Caco-2 (cell line): ENCODE measurements at regions of chr3 and their contacts with region 1.

Region 1: DNA sequence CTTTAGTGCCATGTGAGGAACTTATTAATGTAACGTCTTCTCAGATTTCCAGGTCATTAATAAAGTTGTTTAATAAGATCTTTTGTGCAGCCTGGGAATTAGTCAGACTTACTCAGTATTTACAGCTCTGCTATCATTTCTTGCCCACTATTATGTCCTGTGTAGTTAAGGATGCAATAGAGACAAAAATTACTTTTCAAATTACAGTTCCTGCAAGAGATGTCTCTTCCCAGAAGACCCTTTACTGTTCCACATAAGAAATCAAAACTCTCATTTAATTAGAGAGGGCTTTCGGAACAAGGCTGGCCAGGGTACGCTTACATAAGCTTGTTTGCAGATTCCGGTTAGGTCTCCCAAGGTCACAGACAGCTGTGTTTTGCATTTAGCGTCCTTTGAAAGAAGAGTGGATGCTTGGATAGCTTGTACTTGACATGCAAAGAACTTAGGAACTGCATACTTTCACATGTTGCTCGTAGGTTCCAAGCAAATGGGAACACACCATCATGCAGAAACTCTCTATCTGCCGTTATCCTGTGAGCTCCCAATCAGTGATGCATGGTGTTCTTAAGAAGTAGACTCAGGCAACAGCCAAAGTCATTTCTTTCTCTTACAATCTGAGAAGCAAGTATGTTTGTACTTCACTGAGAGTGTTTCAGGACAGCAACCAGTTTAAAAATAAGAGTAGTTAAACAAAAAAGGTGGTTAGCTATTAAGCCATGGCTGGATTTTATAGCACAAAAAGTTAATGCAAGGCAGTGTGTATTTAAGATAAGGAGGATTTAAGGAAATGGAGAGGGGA is 37.4 kb downstream of the FILIP1L start:
- DNase-seq: peak; percentile 53
- H3K4me3 ChIP-seq: peak overlapping the region; percentile 31
- H3K4me3 Mint-ChIP-seq: peak overlapping the region; percentile 69
- H3K27ac Mint-ChIP-seq: peak overlapping the region; percentile 73
- H3K4me1 ChIP-seq: peaks cover 53% of the 10 kb centered on the region
- H3K4me1 Mint-ChIP-seq: peaks cover 54% of the 10 kb centered on the region
- H3K27me3 ChIP-seq: no peaks in the 10 kb centered on the region
- H3K27me3 Mint-ChIP-seq: no peaks in the 10 kb centered on the region
- CTCF ChIP-seq: no peak

Region 2: DNA sequence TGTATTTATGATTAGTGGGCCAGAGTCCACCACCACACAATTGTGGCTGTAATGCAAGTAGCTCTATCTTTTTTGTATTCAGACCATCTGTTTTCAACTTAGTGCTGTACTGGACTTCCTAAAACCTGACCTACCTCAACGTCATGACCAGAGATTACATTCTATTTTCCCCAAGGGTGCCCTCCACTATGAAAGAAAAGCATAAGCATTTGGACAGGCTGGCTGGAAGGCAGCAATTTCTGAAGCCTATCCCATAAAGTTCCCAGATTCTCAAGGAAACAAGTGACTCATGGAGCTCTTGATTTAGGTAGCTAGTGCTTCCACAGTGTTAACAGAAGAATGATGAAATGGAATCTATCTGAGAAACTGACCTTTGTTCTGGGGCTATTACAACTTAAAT is 362.8 kb before region 1 on chr3:
- CTCF ChIA-PET with region 1: no interaction called
- POLR2A ChIA-PET with region 1: no interaction called
- intact Hi-C with region 1: no loop called
- DNase-seq: no peak
- H3K4me3 ChIP-seq: no peak overlapping the region
- H3K4me3 Mint-ChIP-seq: no peak overlapping the region
- H3K27ac Mint-ChIP-seq: no peak overlapping the region
- H3K4me1 ChIP-seq: no peaks in the 10 kb centered on the region
- H3K4me1 Mint-ChIP-seq: no peaks in the 10 kb centered on the region
- H3K27me3 ChIP-seq: no peaks in the 10 kb centered on the region
- H3K27me3 Mint-ChIP-seq: peaks cover 8% of the 10 kb centered on the region
- CTCF ChIP-seq: no peak

Region 3: DNA sequence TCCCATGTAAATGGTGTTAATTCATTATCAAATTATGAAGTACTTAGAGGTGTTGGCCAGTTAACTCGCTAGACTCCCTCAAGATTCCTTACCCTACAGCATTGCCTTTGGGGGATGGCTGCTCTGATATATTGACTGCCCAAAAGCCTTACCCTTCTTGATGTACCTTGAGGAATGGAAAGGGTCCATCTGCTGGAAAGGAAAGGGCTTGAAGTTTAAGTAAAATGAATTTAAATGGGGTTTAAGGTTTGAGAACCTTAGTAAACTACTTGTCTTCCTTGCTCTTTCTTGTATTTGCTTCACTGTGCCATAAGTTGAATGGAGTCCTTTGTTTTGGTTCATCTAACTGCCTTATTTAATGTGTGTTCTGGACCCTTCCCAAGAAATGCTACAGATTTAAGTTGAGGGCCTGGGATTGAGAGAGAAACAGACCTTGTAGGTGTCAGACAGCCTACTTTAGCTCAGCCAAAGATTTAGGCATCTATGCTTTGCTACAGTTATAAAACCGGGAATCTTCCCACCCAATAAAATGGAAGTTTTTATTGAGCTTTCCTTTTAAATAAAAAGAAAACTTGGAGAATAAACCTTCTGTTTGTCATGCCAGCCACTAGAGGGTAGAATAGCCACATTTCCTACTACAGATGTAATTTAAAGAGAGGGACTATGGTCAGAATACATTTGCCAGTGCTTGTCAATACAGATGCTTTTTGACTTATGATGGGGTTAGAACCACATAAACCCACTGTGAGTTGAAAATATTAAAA is 233.9 kb before region 1 on chr3:
- CTCF ChIA-PET with region 1: interaction called, 4 read pairs
- POLR2A ChIA-PET with region 1: no interaction called
- intact Hi-C with region 1: loop called (anchors 2 kb)
- DNase-seq: peak in 1 of 2 experiments; percentile 33
- H3K4me3 ChIP-seq: no peak overlapping the region
- H3K4me3 Mint-ChIP-seq: no peak overlapping the region
- H3K27ac Mint-ChIP-seq: no peak overlapping the region
- H3K4me1 ChIP-seq: peaks cover 12% of the 10 kb centered on the region; the same call in 1 of the 2 replicates
- H3K4me1 Mint-ChIP-seq: peaks cover 6% of the 10 kb centered on the region
- H3K27me3 ChIP-seq: no peaks in the 10 kb centered on the region
- H3K27me3 Mint-ChIP-seq: no peaks in the 10 kb centered on the region
- CTCF ChIP-seq: peak; percentile 63 to 67

Region 4: GRCh38 chr3:100024520-100025303 is 52.2 kb before region 1 on chr3:
- CTCF ChIA-PET with region 1: no interaction called
- POLR2A ChIA-PET with region 1: no interaction called
- intact Hi-C with region 1: loop called (anchors 1 kb)
- DNase-seq: peak; percentile 43 to 67
- H3K4me3 ChIP-seq: no peak overlapping the region
- H3K4me3 Mint-ChIP-seq: peak overlapping the region; percentile 53
- H3K27ac Mint-ChIP-seq: no peak overlapping the region
- H3K4me1 ChIP-seq: peaks cover 62% of the 10 kb centered on the region
- H3K4me1 Mint-ChIP-seq: peaks cover 27% of the 10 kb centered on the region
- H3K27me3 ChIP-seq: no peaks in the 10 kb centered on the region
- H3K27me3 Mint-ChIP-seq: no peaks in the 10 kb centered on the region
- CTCF ChIP-seq: no peak

Region 5: DNA sequence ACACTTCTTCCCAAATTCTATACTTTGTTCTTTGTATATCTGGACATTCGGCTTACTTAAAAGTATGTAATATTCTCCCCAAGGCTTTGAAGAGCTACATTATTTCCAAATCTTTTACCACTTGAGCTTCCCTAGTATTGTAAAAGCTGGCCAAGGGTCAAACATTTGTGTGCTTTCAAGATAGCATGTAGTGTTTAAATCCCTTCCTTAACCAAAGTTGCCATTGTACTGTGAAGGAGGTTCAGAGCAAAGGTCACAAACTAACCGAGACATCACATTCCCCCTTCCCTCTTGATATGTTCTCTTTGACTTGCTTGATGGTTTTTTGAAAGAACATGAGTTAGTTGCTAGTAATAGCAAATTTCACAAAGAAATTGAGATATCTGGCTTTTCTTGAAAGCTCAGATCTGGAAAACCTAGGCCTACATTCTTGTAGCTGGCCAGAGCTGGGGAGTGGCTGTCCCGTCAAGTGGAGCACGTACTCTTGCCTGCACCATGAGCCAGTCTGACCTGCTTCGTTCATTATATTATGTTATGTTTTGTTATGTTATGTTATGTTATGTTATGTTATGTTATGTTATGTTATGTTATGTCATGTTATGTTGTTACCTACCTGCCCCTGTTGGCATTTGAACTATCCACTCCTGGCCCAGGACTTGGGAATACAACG is 22.8 kb before region 1 on chr3:
- CTCF ChIA-PET with region 1: interaction called, 8 read pairs
- POLR2A ChIA-PET with region 1: interaction called, 9 read pairs
- intact Hi-C with region 1: loop called (anchors 1 kb)
- DNase-seq: peak; percentile 70 to 73
- H3K4me3 ChIP-seq: no peak overlapping the region
- H3K4me3 Mint-ChIP-seq: peak overlapping the region; percentile 48
- H3K27ac Mint-ChIP-seq: peak overlapping the region; percentile 83
- H3K4me1 ChIP-seq: peaks cover 56% of the 10 kb centered on the region
- H3K4me1 Mint-ChIP-seq: peaks cover 51% of the 10 kb centered on the region
- H3K27me3 ChIP-seq: no peaks in the 10 kb centered on the region
- H3K27me3 Mint-ChIP-seq: no peaks in the 10 kb centered on the region
- CTCF ChIP-seq: no peak

Region 6: GRCh38 chr3:100254168-100254777 is 177.3 kb after region 1 on chr3:
- CTCF ChIA-PET with region 1: interaction called, 9 read pairs
- POLR2A ChIA-PET with region 1: interaction called, 3 read pairs
- intact Hi-C with region 1: loop called (anchors 2 kb)
- DNase-seq: peak; percentile 62 to 68
- H3K4me3 ChIP-seq: no peak overlapping the region
- H3K4me3 Mint-ChIP-seq: no peak overlapping the region
- H3K27ac Mint-ChIP-seq: no peak overlapping the region
- H3K4me1 ChIP-seq: peaks cover 11% of the 10 kb centered on the region
- H3K4me1 Mint-ChIP-seq: peaks cover 13% of the 10 kb centered on the region
- H3K27me3 ChIP-seq: no peaks in the 10 kb centered on the region
- H3K27me3 Mint-ChIP-seq: no peaks in the 10 kb centered on the region
- CTCF ChIP-seq: peak; percentile 64 to 71